ENCODE measurements at regions of chr12 and their contacts with region 1.

Region 1: GRCh38 chr12:96399919-96400797 is at the start of gene CDK17:
- DNase-seq: peak; percentile 79 to 97 (median 90)
- ATAC-seq: peak; percentile 68
- H3K4me3 ChIP-seq: peak within 1 kb of the TSS; percentile 75 to 84
- H3K4me3 Mint-ChIP-seq: peak within 1 kb of the TSS; percentile 93
- H3K27ac ChIP-seq: peak within 1 kb of the TSS; percentile 84 to 85
- H3K27ac Mint-ChIP-seq: peak within 1 kb of the TSS; percentile 98
- H3K4me1 ChIP-seq: peaks cover 30% of the 10 kb centered on the region
- H3K4me1 Mint-ChIP-seq: peaks cover 47% of the 10 kb centered on the region
- H3K27me3 ChIP-seq: no peaks in the 10 kb centered on the region
- H3K27me3 Mint-ChIP-seq: no peaks in the 10 kb centered on the region
- CTCF ChIP-seq: no peak
- total RNA-seq, gene CDK17: 150 to 160 TPM

Region 2: DNA sequence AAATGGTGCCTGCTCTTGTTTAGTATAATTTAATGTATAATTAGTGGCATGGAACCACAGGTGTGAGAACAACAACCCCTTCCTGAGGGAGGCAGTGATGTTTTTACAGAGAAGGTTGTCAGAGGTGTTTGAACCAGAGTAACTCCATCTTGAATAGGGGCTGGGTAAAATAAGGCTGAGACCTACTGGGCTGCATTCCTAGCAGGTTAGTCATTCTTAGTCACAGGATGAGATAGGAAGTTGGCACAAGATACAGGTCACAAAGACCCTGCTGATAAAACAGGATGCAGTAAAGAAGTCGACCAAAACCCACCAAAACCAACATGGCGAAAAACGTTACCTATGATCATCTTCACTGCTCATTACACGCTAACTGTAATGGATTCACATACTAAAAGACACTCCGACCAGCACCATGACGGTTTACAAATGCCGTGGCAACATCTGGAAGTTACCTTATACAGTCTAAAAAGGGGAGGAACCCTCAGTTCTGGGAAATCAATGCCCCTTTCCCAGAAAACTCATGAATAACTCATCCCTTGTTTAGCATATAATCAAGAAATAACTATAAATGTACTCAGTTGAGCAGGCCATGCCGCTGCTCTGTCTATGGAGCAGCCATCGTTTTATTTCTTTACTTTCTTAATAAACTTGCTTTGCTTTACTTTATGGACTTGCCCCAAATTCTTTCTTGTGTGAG is 317.0 kb before region 1 on chr12:
- CTCF ChIA-PET with region 1: no interaction called
- POLR2A ChIA-PET with region 1: no interaction called
- intact Hi-C with region 1: no loop called
- DNase-seq: no peak
- ATAC-seq: no peak
- H3K4me3 ChIP-seq: no peak overlapping the region
- H3K4me3 Mint-ChIP-seq: no peak overlapping the region
- H3K27ac ChIP-seq: no peak overlapping the region
- H3K27ac Mint-ChIP-seq: no peak overlapping the region
- H3K4me1 ChIP-seq: no peaks in the 10 kb centered on the region
- H3K4me1 Mint-ChIP-seq: no peaks in the 10 kb centered on the region
- H3K27me3 ChIP-seq: no peaks in the 10 kb centered on the region
- H3K27me3 Mint-ChIP-seq: no peaks in the 10 kb centered on the region
- CTCF ChIP-seq: no peak

Region 3: GRCh38 chr12:96194971-96195844 is 204.9 kb before region 1 on chr12:
- CTCF ChIA-PET with region 1: interaction called, 4 read pairs
- POLR2A ChIA-PET with region 1: no interaction called
- intact Hi-C with region 1: loop called (anchors 1 to 5 kb)
- DNase-seq: peak; percentile 37 to 93 (median 73)
- ATAC-seq: peak; percentile 70
- H3K4me3 ChIP-seq: peak overlapping the region; percentile 87 to 95
- H3K4me3 Mint-ChIP-seq: peak overlapping the region; percentile 94
- H3K27ac ChIP-seq: peak overlapping the region; percentile 74 to 77
- H3K27ac Mint-ChIP-seq: peak overlapping the region; percentile 97
- H3K4me1 ChIP-seq: peaks cover 43% of the 10 kb centered on the region
- H3K4me1 Mint-ChIP-seq: peaks cover 64% of the 10 kb centered on the region
- H3K27me3 ChIP-seq: no peaks in the 10 kb centered on the region
- H3K27me3 Mint-ChIP-seq: no peaks in the 10 kb centered on the region
- CTCF ChIP-seq: no peak

Region 4: GRCh38 chr12:96233939-96234461 is 166.2 kb before region 1 on chr12:
- CTCF ChIA-PET with region 1: no interaction called
- POLR2A ChIA-PET with region 1: no interaction called
- intact Hi-C with region 1: no loop called
- DNase-seq: no peak
- ATAC-seq: no peak
- H3K4me3 ChIP-seq: no peak overlapping the region
- H3K4me3 Mint-ChIP-seq: no peak overlapping the region
- H3K27ac ChIP-seq: no peak overlapping the region
- H3K27ac Mint-ChIP-seq: no peak overlapping the region
- H3K4me1 ChIP-seq: peaks cover 35% of the 10 kb centered on the region
- H3K4me1 Mint-ChIP-seq: peaks cover 42% of the 10 kb centered on the region
- H3K27me3 ChIP-seq: no peaks in the 10 kb centered on the region
- H3K27me3 Mint-ChIP-seq: no peaks in the 10 kb centered on the region
- CTCF ChIP-seq: no peak

Region 5: GRCh38 chr12:96294831-96295230 is 105.3 kb before region 1 on chr12:
- CTCF ChIA-PET with region 1: interaction called, 4 read pairs
- POLR2A ChIA-PET with region 1: interaction called, 12 read pairs
- intact Hi-C with region 1: loop called (anchors 2 to 5 kb)
- DNase-seq: peak in 2 of 9 experiments; percentile 37 to 56
- ATAC-seq: peak; percentile 29
- H3K4me3 ChIP-seq: no peak overlapping the region
- H3K4me3 Mint-ChIP-seq: no peak overlapping the region
- H3K27ac ChIP-seq: peak overlapping the region in 1 of 2 experiments; percentile 3
- H3K27ac Mint-ChIP-seq: no peak overlapping the region
- H3K4me1 ChIP-seq: peaks cover 13% of the 10 kb centered on the region
- H3K4me1 Mint-ChIP-seq: peaks cover 24% of the 10 kb centered on the region
- H3K27me3 ChIP-seq: no peaks in the 10 kb centered on the region
- H3K27me3 Mint-ChIP-seq: no peaks in the 10 kb centered on the region
- CTCF ChIP-seq: no peak

Region 6: GRCh38 chr12:96335270-96335669 is 64.9 kb before region 1 on chr12:
- CTCF ChIA-PET with region 1: interaction called, 4 read pairs
- POLR2A ChIA-PET with region 1: interaction called, 23 read pairs
- intact Hi-C with region 1: loop called in 1 of 2 experiments (anchors 10 kb)
- DNase-seq: peak in 1 of 9 experiments; percentile 32
- ATAC-seq: peak; percentile 44
- H3K4me3 ChIP-seq: no peak overlapping the region
- H3K4me3 Mint-ChIP-seq: peak overlapping the region; percentile 55
- H3K27ac ChIP-seq: no peak overlapping the region
- H3K27ac Mint-ChIP-seq: peak overlapping the region; percentile 16
- H3K4me1 ChIP-seq: peaks cover 19% of the 10 kb centered on the region
- H3K4me1 Mint-ChIP-seq: peaks cover 59% of the 10 kb centered on the region
- H3K27me3 ChIP-seq: no peaks in the 10 kb centered on the region
- H3K27me3 Mint-ChIP-seq: no peaks in the 10 kb centered on the region
- CTCF ChIP-seq: no peak

Region 7: GRCh38 chr12:96383991-96384390 is 16.2 kb before region 1 on chr12:
- CTCF ChIA-PET with region 1: interaction called, 12 read pairs
- POLR2A ChIA-PET with region 1: interaction called, 22 read pairs
- intact Hi-C with region 1: loop called in 1 of 2 experiments (anchors 1 kb)
- DNase-seq: no peak
- ATAC-seq: no peak
- H3K4me3 ChIP-seq: no peak overlapping the region
- H3K4me3 Mint-ChIP-seq: no peak overlapping the region
- H3K27ac ChIP-seq: no peak overlapping the region
- H3K27ac Mint-ChIP-seq: no peak overlapping the region
- H3K4me1 ChIP-seq: peaks cover 26% of the 10 kb centered on the region
- H3K4me1 Mint-ChIP-seq: peaks cover 81% of the 10 kb centered on the region
- H3K27me3 ChIP-seq: no peaks in the 10 kb centered on the region
- H3K27me3 Mint-ChIP-seq: no peaks in the 10 kb centered on the region
- CTCF ChIP-seq: no peak

Region 8: DNA sequence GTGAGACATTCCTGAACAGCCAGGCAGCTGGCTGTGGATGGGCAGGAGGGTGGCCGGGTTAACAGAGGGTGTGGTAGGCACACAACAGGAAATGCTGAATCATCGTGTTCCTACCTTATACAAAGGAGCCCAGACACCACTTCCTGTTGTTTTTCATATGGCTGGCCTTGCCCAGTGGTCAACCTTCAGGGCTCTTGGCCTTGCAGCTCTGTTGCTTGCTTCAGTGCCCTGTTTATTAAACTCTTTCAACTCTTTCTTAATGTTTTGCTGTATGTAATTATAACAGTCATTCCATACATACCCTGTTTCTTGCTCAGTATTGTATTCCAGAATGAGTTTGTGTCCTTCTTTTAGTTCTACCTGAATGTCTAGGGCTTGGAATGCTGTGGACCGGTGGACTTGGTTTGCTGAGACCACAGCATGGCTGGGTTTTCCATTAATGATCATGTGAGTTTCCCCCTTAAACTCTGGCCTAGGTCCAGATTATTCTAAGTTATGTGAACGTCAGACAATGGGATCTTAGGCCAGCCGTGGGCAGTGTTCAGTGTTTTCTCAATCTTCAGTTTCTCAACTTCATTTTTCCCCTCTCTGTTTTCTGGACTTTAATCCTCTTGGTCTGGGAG is 101.1 kb after region 1 on chr12:
- CTCF ChIA-PET with region 1: interaction called, 5 read pairs
- POLR2A ChIA-PET with region 1: interaction called, 3 read pairs
- intact Hi-C with region 1: loop called in 1 of 2 experiments (anchors 1 kb)
- DNase-seq: peak in 8 of 9 experiments; percentile 23 to 75 (median 48)
- ATAC-seq: peak; percentile 79
- H3K4me3 ChIP-seq: no peak overlapping the region
- H3K4me3 Mint-ChIP-seq: peak overlapping the region; percentile 52
- H3K27ac ChIP-seq: peak overlapping the region in 1 of 2 experiments; percentile 76
- H3K27ac Mint-ChIP-seq: peak overlapping the region; percentile 87
- H3K4me1 ChIP-seq: peaks cover 33% of the 10 kb centered on the region
- H3K4me1 Mint-ChIP-seq: peaks cover 42% of the 10 kb centered on the region
- H3K27me3 ChIP-seq: no peaks in the 10 kb centered on the region
- H3K27me3 Mint-ChIP-seq: no peaks in the 10 kb centered on the region
- CTCF ChIP-seq: no peak

Region 9: DNA sequence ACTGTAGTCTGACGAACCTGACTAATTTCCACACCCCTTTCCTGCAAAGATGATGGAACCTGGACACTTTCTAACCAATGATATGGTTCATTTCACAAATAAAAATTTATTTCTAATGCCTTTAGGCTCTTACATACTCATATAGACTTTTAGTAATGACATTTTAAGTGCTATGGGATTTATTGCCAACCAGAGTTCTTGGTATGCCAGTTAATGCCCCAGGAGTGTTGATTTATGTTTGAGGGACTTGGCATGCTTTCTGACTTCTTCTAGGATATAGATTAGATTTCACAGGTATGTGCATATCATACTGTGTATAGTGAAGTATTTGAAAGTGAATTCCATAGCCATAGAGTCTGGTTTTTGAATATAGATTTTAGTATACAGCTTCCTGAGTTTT is 248.8 kb after region 1 on chr12:
- CTCF ChIA-PET with region 1: no interaction called
- POLR2A ChIA-PET with region 1: no interaction called
- intact Hi-C with region 1: no loop called
- DNase-seq: no peak
- ATAC-seq: no peak
- H3K4me3 ChIP-seq: no peak overlapping the region
- H3K4me3 Mint-ChIP-seq: no peak overlapping the region
- H3K27ac ChIP-seq: no peak overlapping the region
- H3K27ac Mint-ChIP-seq: no peak overlapping the region
- H3K4me1 ChIP-seq: no peaks in the 10 kb centered on the region
- H3K4me1 Mint-ChIP-seq: no peaks in the 10 kb centered on the region
- H3K27me3 ChIP-seq: no peaks in the 10 kb centered on the region
- H3K27me3 Mint-ChIP-seq: no peaks in the 10 kb centered on the region
- CTCF ChIP-seq: no peak